Heart left ventricle (tissue), 16 donors: ENCODE measurements at regions of chr14 and their contacts with region 1.

Region 1: DNA sequence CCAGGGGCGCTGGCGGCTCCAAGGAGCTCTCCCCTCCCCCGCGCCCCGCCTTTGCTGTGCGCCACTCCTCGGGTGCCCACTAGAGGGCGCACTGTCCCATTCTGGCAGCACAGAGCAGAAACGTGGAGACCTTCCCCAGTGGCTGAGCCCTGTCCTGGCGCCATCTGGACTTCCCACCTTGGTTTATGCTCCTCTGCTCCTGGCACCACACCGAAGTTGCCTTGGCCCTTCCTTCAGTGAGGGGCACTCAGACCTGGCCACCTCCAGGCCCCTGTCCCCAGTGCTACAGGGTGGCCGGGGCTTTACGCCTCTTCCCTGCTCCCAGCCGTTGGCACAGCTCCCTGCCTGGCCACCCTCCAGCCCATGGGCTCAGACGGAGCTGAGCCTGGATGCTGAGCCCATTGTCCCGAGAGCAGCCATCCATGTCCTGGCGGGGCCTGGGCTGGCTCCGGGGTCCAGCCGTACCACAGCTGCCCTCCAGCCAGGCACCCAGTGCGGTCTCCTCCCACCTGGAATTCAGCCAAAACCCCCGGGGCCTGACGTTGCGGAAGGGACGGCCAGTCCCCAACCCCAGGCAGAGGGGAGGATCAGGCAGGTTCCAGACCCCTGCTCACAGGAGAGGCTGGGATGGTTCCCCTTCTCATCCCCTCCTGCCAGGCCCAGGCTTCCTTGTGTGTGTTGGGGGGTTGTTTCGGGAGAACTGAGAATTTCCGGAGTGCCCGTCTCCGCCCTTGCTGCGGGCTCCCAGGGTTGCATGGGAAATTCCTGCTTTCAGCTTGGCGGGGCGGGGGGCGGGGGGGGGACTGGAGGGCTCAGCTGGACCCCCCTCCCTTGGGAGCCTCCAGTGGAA is 5.5 kb upstream of the CRIP1 start:
- DNase-seq: peak; percentile 91 to 95 (median 92)
- ATAC-seq: peak; percentile 59 to 76 (median 68)
- H3K4me3 ChIP-seq: peak overlapping the region; percentile 0 to 56 (median 42)
- H3K27ac ChIP-seq: peak overlapping the region; percentile 94 to 100 (median 97)
- H3K4me1 ChIP-seq: peaks cover 25 to 97% (median 87%) of the 10 kb centered on the region in 12 donors
- H3K27me3 ChIP-seq: peaks cover 0 to 12% (median 0%) of the 10 kb centered on the region in 9 donors
- CTCF ChIP-seq: peak; percentile 98 to 100 (median 99)
- POLR2A ChIP-seq: no peak

Region 2: GRCh38 chr14:105414456-105415371 is 66.5 kb before region 1 on chr14:
- intact Hi-C with region 1: loop called in 1 of 10 experiments (anchors 10 kb)
- DNase-seq: peak; percentile 83 to 92 (median 84)
- ATAC-seq: peak; percentile 49 to 87 (median 80)
- H3K4me3 ChIP-seq: peak overlapping the region; percentile 5 to 69 (median 58)
- H3K27ac ChIP-seq: peak overlapping the region in 11 of 12 donors; percentile 66 to 87 (median 80)
- H3K4me1 ChIP-seq: peaks cover 0 to 43% (median 24%) of the 10 kb centered on the region in 12 donors
- H3K27me3 ChIP-seq: peaks cover 0 to 29% (median 0%) of the 10 kb centered on the region in 9 donors
- CTCF ChIP-seq: peak; percentile 47 to 91 (median 78)
- POLR2A ChIP-seq: peak in 1 of 2 donors; percentile 41

Region 3: GRCh38 chr14:105554022-105554421 is 72.8 kb after region 1 on chr14:
- intact Hi-C with region 1: no loop called
- DNase-seq: no peak
- ATAC-seq: no peak
- H3K4me3 ChIP-seq: no peak overlapping the region
- H3K27ac ChIP-seq: no peak overlapping the region
- H3K4me1 ChIP-seq: no peaks in the 10 kb centered on the region
- H3K27me3 ChIP-seq: peaks cover 0 to 11% (median 0%) of the 10 kb centered on the region in 9 donors
- CTCF ChIP-seq: no peak
- POLR2A ChIP-seq: no peak

Region 4: GRCh38 chr14:105682940-105683570 is 201.9 kb after region 1 on chr14:
- intact Hi-C with region 1: no loop called
- DNase-seq: no peak
- ATAC-seq: no peak
- H3K4me3 ChIP-seq: no peak overlapping the region
- H3K27ac ChIP-seq: no peak overlapping the region
- H3K4me1 ChIP-seq: no peaks in the 10 kb centered on the region
- H3K27me3 ChIP-seq: peaks cover 0 to 4% (median 0%) of the 10 kb centered on the region in 9 donors
- CTCF ChIP-seq: no peak
- POLR2A ChIP-seq: no peak